ENCODE measurements at regions of chr15 and their contacts with region 1.

Region 1: DNA sequence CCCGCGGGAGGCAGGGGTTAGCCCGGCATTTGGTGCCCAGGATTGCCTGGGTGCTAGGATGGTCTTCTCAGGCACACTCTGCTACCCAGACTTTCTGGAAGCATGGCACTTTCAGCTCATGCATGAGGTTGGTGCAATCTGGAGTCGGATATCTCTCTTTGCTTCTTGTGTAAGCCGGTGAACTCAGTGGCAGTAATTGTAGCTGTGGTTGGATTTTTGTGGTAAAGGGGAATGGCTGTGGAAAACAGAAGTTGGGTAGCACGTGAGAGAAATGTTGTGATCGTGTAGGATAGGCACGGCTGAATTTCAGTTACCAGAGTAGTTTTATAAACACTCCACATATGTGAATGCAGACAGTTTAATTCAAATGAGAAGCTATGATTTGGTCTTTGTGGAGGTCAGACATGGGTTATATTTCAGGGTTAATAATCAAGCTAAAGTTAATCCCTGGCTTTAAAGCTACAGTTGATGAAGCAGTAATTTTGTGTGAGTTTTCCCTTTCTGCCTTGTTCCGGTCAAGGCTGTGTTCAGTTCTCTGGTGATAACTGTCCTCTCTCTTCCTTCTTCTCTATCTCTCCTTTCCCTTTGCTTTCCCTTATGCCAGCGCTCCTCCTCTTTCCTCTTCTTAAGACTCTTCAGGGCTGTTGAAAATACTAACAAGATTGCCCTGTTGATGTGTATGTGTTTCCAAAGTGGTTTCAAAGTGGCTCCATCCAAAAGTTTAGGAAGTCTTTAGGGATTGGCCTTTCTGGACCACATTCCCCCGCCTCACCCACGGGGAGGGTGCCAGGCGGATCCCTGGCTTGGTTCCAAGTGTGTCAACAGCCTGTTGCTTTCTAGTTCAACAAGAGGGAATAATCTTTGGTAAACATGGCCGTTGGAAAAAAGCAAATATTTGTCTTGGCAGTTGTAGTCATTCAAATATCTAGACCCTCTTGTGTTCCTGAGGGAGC is 404.7 kb upstream of the C2CD4B start:
- DNase-seq: peak; percentile 91
- H3K4me3 ChIP-seq: peak overlapping the region; percentile 3; the same call in 1 of the 2 replicates
- H3K27ac ChIP-seq: peak overlapping the region; percentile 61
- H3K27me3 ChIP-seq: peaks cover 3% of the 10 kb centered on the region
- CTCF ChIP-seq: no peak

Region 2: DNA sequence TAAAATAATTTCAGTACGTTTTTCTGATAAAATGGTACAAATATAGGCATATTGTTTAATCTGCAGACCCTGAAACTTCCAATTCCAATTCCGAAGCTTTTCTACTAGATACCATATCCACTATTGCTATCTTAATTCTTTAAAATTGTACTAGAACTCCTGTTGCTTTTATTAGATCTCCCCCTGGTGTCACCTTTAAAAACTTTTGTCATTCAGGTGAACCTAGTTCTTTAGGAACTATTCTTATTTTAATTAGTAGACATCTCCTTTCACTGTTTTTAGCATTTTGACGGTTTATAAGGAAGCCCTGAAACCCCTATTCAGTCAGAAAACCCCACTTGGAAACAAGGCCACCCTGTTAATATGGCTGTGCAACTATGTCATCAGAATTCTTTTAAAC is 427.0 kb before region 1 on chr15:
- CTCF ChIA-PET with region 1: no interaction called
- POLR2A ChIA-PET with region 1: no interaction called
- DNase-seq: no peak
- H3K4me3 ChIP-seq: no peak overlapping the region
- H3K27ac ChIP-seq: no peak overlapping the region
- H3K27me3 ChIP-seq: peaks cover 10% of the 10 kb centered on the region
- CTCF ChIP-seq: no peak

Region 3: GRCh38 chr15:64229129-64229724 is 1659.5 kb after region 1 on chr15:
- CTCF ChIA-PET with region 1: no interaction called
- POLR2A ChIA-PET with region 1: interaction called, 14 read pairs
- DNase-seq: no peak
- H3K4me3 ChIP-seq: no peak overlapping the region
- H3K27ac ChIP-seq: no peak overlapping the region
- H3K27me3 ChIP-seq: no peaks in the 10 kb centered on the region
- CTCF ChIP-seq: no peak

Measured in AG04450 (cell line).